ENCODE measurements at regions of chr11 and their contacts with region 1.

Region 1: DNA sequence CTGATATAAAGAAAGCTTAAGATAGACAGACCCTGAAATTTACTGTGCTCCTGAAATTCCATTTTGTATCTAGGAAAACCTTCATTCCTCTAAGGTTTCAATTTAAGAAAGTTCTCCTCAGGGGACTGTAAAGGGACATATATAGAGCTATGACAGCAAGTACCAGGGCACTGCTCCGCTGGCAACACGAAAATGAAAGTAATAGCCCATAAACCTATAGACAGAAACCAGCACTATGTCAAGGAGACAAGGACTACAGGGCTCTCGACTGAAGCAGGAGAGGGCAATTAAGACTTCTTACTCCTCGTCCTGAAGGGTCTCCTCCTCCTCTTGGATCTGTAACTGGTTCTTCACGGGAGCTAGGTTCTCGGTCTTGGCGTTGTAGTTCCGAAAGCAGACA is 6.9 kb downstream of the FEZ1 start:
- DNase-seq: no peak
- ATAC-seq: peak; percentile 82
- H3K4me3 ChIP-seq: peak overlapping the region; percentile 30 to 57
- H3K27ac ChIP-seq: peak overlapping the region; percentile 40; the same call in 1 of the 2 replicates
- H3K4me1 ChIP-seq: no peaks in the 10 kb centered on the region
- H3K27me3 ChIP-seq: peaks cover 9% of the 10 kb centered on the region
- CTCF ChIP-seq: no peak

Region 2: DNA sequence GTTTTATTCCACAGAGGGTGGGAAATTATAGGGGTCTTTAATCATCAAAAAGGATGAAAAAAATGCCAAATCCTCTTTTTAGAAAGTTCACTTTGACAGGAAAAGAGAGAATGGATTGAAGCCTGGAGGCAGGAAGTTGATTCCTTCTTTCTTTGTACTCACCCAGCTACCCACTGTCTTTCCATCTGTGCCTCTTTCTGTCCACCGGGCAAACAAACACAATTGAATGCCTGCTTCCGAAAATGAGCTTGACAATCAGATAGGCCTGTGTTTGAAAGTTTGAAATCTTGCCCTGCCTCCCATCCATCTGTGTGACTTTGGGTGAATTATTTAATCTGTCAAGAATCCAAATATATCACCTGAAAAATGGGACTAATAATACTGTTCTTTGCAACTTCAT is 1915.9 kb before region 1 on chr11:
- CTCF ChIA-PET with region 1: no interaction called
- POLR2A ChIA-PET with region 1: interaction called, 12 read pairs
- in situ Hi-C with region 1: no loop called
- intact Hi-C with region 1: no loop called
- DNase-seq: no peak
- ATAC-seq: no peak
- H3K4me3 ChIP-seq: no peak overlapping the region
- H3K27ac ChIP-seq: no peak overlapping the region
- H3K4me1 ChIP-seq: no peaks in the 10 kb centered on the region
- H3K27me3 ChIP-seq: peaks cover 20% of the 10 kb centered on the region
- CTCF ChIP-seq: no peak

Region 3: GRCh38 chr11:125568970-125569914 is 80.1 kb after region 1 on chr11 and contains the start of gene EI24:
- CTCF ChIA-PET with region 1: no interaction called
- POLR2A ChIA-PET with region 1: interaction called, 17 read pairs
- in situ Hi-C with region 1: no loop called
- intact Hi-C with region 1: no loop called
- DNase-seq: peak; percentile 77
- ATAC-seq: peak; percentile 100
- H3K4me3 ChIP-seq: peak within 1 kb of the TSS; percentile 87 to 98
- H3K27ac ChIP-seq: peak within 1 kb of the TSS; percentile 96
- H3K4me1 ChIP-seq: peaks cover 12% of the 10 kb centered on the region
- H3K27me3 ChIP-seq: no peaks in the 10 kb centered on the region
- CTCF ChIP-seq: peak; percentile 87
- total RNA-seq, gene EI24: 193 TPM

Measured in Panc1 (cell line).